ENCODE measurements at regions of chr4 and their contacts with region 1.

Region 1: DNA sequence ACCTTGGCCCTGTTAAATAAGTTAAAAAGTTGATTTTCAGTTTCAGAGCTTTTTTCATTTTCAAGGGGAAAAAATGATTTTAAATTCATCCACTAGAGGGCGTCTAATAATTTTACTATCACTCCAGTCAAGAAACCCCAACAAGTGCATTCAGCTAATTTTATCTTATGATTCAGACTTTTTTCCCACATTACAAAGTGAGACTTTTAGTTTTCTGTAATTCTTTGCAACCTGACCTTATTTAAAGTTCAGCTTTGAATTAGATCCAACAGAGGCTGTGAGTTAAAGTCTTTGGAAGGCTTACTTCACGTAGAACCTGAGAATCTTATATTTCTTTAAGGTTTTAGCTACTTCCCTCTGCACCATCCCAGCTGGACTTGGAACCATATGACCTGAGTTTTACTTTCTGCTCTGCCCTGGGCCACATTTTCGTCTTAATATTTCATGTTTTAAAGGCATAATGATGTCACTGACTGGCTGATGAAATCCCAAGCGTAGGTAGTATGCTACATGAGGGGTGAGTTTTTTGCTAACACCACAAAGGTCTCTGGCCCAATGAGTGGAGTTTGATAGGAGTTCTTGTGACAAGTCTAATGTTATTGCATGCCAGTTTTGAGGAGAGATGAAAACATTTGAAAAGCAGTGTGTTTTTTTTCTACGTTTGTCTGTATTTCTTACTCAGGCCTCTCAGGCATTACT is 7.2 kb downstream of the GNRHR start:
- DNase-seq: no peak
- ATAC-seq: no peak
- H3K4me3 Mint-ChIP-seq: no peak overlapping the region
- H3K27ac Mint-ChIP-seq: no peak overlapping the region
- H3K4me1 Mint-ChIP-seq: peaks cover 6% of the 10 kb centered on the region
- H3K27me3 Mint-ChIP-seq: no peaks in the 10 kb centered on the region

Region 2: DNA sequence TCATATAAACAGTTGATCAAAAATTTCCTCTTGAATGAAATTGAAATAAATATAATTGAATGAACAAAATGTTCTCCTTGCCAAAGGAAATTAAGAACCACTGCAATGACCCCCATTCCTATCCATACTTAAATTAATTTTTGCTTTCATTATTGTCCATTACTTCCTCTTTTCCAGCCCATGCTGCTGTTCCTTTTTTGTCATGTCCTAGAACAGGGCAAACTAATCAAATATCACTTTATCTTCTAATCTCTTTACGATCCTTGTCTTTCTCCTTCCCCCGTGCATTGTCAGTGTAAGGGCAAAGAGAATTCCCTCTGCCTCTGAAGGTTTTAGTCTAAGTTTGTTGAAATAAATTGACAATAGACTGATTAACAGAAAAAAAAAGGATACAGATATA is 404.7 kb before region 1 on chr4:
- CTCF ChIA-PET with region 1: no interaction called
- POLR2A ChIA-PET with region 1: no interaction called
- DNase-seq: no peak
- ATAC-seq: no peak
- H3K4me3 Mint-ChIP-seq: no peak overlapping the region
- H3K27ac Mint-ChIP-seq: no peak overlapping the region
- H3K4me1 Mint-ChIP-seq: no peaks in the 10 kb centered on the region
- H3K27me3 Mint-ChIP-seq: peaks cover 9% of the 10 kb centered on the region

Region 3: GRCh38 chr4:67700738-67701516 is 46.0 kb before region 1 on chr4 and contains the start of gene UBA6:
- CTCF ChIA-PET with region 1: interaction called, 12 read pairs
- POLR2A ChIA-PET with region 1: interaction called, 3 read pairs
- DNase-seq: peak; percentile 97
- ATAC-seq: peak; percentile 94
- H3K4me3 Mint-ChIP-seq: peak within 1 kb of the TSS; percentile 90
- H3K27ac Mint-ChIP-seq: peak within 1 kb of the TSS; percentile 96
- H3K4me1 Mint-ChIP-seq: peaks cover 55% of the 10 kb centered on the region
- H3K27me3 Mint-ChIP-seq: no peaks in the 10 kb centered on the region
- total RNA-seq, gene UBA6: 90.8 to 91.1 TPM

Region 4: GRCh38 chr4:67714248-67714583 is 32.7 kb before region 1 on chr4:
- CTCF ChIA-PET with region 1: interaction called, 16 read pairs
- POLR2A ChIA-PET with region 1: no interaction called
- DNase-seq: no peak
- ATAC-seq: no peak
- H3K4me3 Mint-ChIP-seq: no peak overlapping the region
- H3K27ac Mint-ChIP-seq: no peak overlapping the region
- H3K4me1 Mint-ChIP-seq: peaks cover 18% of the 10 kb centered on the region
- H3K27me3 Mint-ChIP-seq: no peaks in the 10 kb centered on the region

Region 5: DNA sequence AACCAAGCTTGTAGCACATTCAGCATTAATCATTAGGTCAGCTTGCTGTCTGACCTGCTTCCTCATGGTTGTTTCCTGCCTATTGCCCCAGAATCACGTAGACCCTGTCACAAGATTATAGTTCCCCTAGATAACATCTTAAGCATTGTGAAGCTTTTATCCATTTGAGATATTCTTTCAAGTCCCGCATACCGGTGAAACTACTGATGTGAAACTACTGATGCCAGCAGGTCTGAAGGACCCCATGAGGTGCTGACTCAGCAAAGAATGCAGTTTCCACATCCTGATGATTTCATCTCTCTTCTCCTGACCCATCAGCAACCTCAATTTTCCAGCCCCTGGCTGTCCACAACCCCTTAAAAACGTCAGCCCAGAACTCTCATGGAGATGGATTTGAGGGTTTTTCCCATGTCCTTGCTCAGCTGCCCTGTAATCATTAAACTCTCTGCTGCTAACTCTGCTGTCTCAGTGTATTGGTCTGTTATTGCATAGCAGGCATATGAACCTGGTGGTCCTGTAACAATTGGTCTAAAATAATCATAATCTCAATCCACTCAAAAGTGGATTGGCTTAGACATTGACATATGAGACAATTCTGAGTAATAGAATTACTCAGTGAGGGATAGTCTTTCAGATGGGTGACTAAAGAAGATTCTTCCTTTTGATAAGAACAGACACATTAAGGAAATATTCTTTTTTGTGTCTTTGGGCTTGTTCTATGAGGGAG is 19.7 kb before region 1 on chr4:
- CTCF ChIA-PET with region 1: interaction called, 22 read pairs
- POLR2A ChIA-PET with region 1: no interaction called
- DNase-seq: no peak
- ATAC-seq: no peak
- H3K4me3 Mint-ChIP-seq: no peak overlapping the region
- H3K27ac Mint-ChIP-seq: no peak overlapping the region
- H3K4me1 Mint-ChIP-seq: peaks cover 2% of the 10 kb centered on the region
- H3K27me3 Mint-ChIP-seq: no peaks in the 10 kb centered on the region

Region 6: GRCh38 chr4:67762086-67762485 is 15.1 kb after region 1 on chr4:
- CTCF ChIA-PET with region 1: interaction called, 29 read pairs
- POLR2A ChIA-PET with region 1: no interaction called
- DNase-seq: peak; percentile 24
- ATAC-seq: peak; percentile 76
- H3K4me3 Mint-ChIP-seq: peak overlapping the region; percentile 16
- H3K27ac Mint-ChIP-seq: no peak overlapping the region
- H3K4me1 Mint-ChIP-seq: peaks cover 6% of the 10 kb centered on the region
- H3K27me3 Mint-ChIP-seq: no peaks in the 10 kb centered on the region

Region 7: DNA sequence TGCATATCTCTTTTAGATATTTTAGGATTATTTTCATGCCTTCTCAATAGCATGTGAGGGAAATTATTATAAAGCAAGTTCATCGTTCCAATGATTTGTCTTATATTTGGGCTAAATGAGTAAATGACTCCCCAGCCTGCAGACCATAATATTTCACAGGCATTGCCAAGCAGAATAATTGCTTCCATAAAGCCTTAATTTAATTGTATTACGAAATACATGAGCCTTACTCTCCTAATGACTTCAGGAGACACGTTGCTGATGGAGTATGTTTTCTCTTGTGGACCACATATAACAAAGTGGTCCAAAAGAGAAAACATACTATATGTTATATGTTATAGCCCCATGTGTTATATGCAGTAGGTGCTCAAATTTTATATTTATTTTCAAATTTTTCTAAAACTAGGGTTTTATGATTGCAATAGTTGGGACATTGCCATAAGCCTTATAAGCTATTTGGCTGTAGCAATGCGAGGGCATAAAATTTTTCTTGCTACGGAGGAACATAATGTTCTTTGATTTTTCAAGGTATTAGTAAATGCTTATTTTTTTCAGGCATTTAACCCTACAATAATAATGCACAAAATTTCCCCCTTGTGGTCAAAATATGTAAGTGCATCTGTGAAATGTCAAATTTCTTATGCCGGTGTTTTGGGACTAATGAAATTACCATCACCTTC is 163.1 kb after region 1 on chr4:
- CTCF ChIA-PET with region 1: interaction called, 11 read pairs
- POLR2A ChIA-PET with region 1: no interaction called
- DNase-seq: no peak
- ATAC-seq: no peak
- H3K4me3 Mint-ChIP-seq: no peak overlapping the region
- H3K27ac Mint-ChIP-seq: no peak overlapping the region
- H3K4me1 Mint-ChIP-seq: no peaks in the 10 kb centered on the region
- H3K27me3 Mint-ChIP-seq: peaks cover 12% of the 10 kb centered on the region

Measured in activated CD8-positive, alpha-beta T cell treated with anti-CD3 and anti-CD28 coated beads, Interleukin-2, amount 10 ng/mL, durations not matched to agents 7 days and 5 days (primary cell).